CD4-positive, alpha-beta T cell (primary cell): ENCODE measurements at regions of chr2 and their contacts with region 1.

Region 1: DNA sequence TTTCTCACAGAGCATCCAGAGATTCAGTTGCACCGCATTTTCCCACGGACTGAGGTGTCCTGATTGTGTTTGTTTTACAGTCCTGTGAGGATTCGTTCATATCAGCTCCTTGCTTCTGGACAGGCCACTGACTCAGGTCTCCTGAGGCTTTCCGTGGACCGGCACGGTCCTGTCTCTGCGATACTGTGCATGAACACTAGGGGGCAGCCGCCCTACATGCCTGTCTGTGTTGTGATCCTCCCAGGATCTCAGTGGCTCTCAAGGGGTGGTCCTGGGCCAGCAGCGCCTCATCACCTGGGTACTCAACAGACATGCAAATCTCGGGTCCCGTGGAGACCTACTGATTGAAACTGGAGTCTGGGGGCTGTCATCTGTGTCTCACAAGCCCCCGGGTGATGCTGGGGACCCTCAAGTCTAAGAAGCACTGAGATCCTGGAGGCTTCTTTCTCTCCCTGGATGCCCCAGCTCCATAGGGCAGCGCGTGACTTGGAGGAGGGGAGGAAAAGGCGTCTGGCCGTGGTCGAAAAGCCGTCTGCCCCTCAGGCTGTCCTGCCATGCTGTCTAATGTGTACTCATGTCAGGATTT is 28.9 kb downstream of the IL1R2 start:
- DNase-seq: peak; percentile 69 to 88 (median 79)
- ATAC-seq: peak; percentile 96
- H3K4me3 ChIP-seq: no peak overlapping the region
- H3K4me3 Mint-ChIP-seq: no peak overlapping the region
- H3K27ac ChIP-seq: no peak overlapping the region
- H3K27ac Mint-ChIP-seq: no peak overlapping the region
- H3K4me1 ChIP-seq: peaks cover 6% of the 10 kb centered on the region
- H3K4me1 Mint-ChIP-seq: no peaks in the 10 kb centered on the region
- H3K27me3 ChIP-seq: no peaks in the 10 kb centered on the region
- H3K27me3 Mint-ChIP-seq: peaks cover 3% of the 10 kb centered on the region
- CTCF ChIP-seq: peak; percentile 98

Region 2: DNA sequence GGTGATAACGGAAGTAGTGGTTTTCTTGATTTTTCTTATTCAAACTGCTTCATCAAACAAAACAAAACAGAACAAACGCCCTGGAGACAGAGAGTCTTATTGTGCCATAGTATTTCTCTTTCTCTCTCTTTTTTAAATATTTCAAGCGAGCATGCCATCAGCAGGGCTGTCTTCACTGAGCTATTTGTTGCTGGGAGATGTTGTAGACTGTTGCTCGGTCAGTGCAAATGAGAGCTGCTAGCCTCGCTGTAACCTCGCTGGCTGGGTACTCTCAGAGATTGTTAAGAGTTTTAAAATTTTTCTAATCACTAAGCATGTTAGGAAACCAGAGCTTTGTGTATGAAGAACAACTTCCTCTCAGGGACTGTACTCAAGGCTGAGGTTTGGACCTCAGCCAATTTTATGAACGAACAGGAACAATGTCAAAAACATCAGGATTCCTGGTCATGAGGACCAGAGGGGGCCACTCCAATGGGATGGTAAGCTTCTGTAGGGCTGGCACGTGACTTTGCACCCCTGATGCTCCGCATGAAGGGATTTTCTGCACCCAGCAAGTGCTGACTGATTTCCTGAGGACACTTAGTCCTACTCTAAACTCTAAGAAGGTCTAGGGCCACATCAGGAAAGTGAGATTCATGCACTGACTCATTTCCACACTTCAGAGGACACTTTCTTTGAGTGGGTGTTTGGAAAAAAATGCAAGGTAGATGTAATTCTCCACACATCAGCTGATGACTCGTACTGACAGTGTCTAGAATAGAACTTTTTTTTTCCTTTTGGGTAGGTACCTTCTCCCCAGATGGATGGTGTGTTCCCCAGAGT is 62.1 kb after region 1 on chr2:
- CTCF ChIA-PET with region 1: interaction called, 3 read pairs
- POLR2A ChIA-PET with region 1: no interaction called
- intact Hi-C with region 1: loop called in 1 of 2 experiments (anchors 5 kb)
- DNase-seq: peak in 9 of 14 experiments; percentile 3 to 80 (median 19)
- ATAC-seq: peak; percentile 80
- H3K4me3 ChIP-seq: peak overlapping the region; percentile 36
- H3K4me3 Mint-ChIP-seq: peak overlapping the region; percentile 77
- H3K27ac ChIP-seq: peak overlapping the region; percentile 44 to 79
- H3K27ac Mint-ChIP-seq: peak overlapping the region; percentile 86
- H3K4me1 ChIP-seq: peaks cover 21% of the 10 kb centered on the region
- H3K4me1 Mint-ChIP-seq: peaks cover 44% of the 10 kb centered on the region
- H3K27me3 ChIP-seq: no peaks in the 10 kb centered on the region
- H3K27me3 Mint-ChIP-seq: no peaks in the 10 kb centered on the region
- CTCF ChIP-seq: no peak

Region 3: DNA sequence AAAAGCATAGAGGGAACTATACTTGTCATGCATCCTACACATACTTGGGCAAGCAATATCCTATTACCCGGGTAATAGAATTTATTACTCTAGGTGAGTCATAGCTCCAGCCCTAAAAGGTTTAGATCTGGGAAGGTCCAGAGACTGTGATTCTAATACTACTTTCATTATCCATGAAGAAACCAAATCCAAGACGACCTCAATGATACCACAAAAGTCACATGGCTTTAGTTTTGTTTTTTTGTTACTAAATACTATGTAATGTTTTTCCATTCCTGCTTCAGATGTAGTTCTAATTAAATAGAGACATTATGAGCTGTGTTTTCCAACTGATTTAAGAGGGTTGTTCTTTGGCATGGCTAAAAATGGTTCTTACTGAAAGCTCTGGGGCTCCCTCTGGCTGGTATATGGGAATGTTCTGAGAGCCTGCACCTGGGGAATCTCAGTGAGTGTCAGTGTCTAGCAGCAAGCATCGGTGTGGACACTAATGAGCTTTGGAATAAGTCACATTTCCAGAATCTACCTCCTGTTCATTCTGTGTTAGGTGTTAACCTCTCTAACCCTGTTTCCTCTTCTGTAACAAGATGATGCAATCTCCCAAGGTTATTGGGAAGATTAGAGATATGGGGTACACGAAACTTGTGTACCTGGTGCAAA is 145.6 kb after region 1 on chr2:
- CTCF ChIA-PET with region 1: interaction called, 3 read pairs
- POLR2A ChIA-PET with region 1: no interaction called
- intact Hi-C with region 1: loop called (anchors 10 kb)
- DNase-seq: peak in 1 of 14 experiments; percentile 13
- ATAC-seq: no peak
- H3K4me3 ChIP-seq: no peak overlapping the region
- H3K4me3 Mint-ChIP-seq: no peak overlapping the region
- H3K27ac ChIP-seq: no peak overlapping the region
- H3K27ac Mint-ChIP-seq: no peak overlapping the region
- H3K4me1 ChIP-seq: no peaks in the 10 kb centered on the region
- H3K4me1 Mint-ChIP-seq: no peaks in the 10 kb centered on the region
- H3K27me3 ChIP-seq: no peaks in the 10 kb centered on the region
- H3K27me3 Mint-ChIP-seq: no peaks in the 10 kb centered on the region
- CTCF ChIP-seq: no peak

Region 4: GRCh38 chr2:102240640-102241370 is 220.1 kb after region 1 on chr2:
- CTCF ChIA-PET with region 1: interaction called, 23 read pairs
- POLR2A ChIA-PET with region 1: interaction called, 7 read pairs
- intact Hi-C with region 1: loop called (anchors 1 kb)
- DNase-seq: peak; percentile 74 to 93 (median 85)
- ATAC-seq: peak; percentile 94
- H3K4me3 ChIP-seq: no peak overlapping the region
- H3K4me3 Mint-ChIP-seq: no peak overlapping the region
- H3K27ac ChIP-seq: no peak overlapping the region
- H3K27ac Mint-ChIP-seq: no peak overlapping the region
- H3K4me1 ChIP-seq: peaks cover 21% of the 10 kb centered on the region
- H3K4me1 Mint-ChIP-seq: peaks cover 9% of the 10 kb centered on the region
- H3K27me3 ChIP-seq: no peaks in the 10 kb centered on the region
- H3K27me3 Mint-ChIP-seq: no peaks in the 10 kb centered on the region
- CTCF ChIP-seq: peak; percentile 93

Region 5: DNA sequence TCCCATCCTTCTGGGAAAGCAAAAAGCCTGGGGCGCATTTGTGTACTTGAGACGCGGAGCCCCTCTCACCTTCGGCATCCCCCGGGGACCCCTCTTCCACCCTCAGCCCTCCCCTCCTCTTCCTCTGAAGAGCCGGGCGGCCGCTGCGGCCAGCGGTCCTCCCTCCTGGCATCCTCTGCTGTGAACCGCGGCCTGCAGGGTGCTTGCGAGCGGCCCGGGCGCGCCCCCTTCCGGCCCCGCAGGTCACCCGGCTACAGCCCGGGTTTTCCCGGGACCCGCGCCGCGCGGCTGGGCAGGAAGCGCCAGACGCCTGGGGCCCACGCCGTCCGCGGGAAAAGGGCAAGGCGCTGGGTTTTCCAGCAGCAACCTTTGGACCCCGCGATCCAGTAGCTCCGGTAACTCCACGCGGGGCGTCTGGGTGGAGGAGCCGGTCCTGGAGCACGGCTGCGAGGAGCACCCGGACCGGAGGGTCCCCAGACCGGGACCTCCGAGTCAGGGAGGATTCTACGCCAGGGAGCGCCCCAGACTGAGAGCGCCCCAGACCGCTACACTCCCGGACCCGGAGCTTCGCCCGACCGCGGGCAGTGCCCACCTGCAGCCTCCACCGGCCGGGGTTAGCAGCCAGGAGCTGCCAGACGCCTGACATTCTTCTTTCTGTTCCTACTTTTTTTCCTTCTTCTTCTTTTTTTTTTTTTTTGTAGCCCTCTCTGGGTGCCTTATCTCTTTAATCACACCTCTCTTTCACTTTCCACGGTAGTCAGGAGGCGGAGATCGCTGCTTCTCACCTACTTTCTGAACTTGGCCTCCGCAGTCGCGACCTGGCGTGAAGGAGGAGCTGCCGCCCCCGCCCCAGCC is 335.1 kb after region 1 on chr2 and contains the start of gene IL18R1:
- CTCF ChIA-PET with region 1: interaction called, 3 read pairs
- POLR2A ChIA-PET with region 1: no interaction called
- intact Hi-C with region 1: loop called in 1 of 2 experiments (anchors 5 kb)
- DNase-seq: peak; percentile 29 to 88 (median 55)
- ATAC-seq: peak; percentile 76
- H3K4me3 ChIP-seq: peak within 1 kb of the TSS; percentile 97
- H3K4me3 Mint-ChIP-seq: peak within 1 kb of the TSS; percentile 91
- H3K27ac ChIP-seq: peak within 1 kb of the TSS; percentile 41 to 83
- H3K27ac Mint-ChIP-seq: peak within 1 kb of the TSS; percentile 87
- H3K4me1 ChIP-seq: peaks cover 27% of the 10 kb centered on the region
- H3K4me1 Mint-ChIP-seq: peaks cover 44% of the 10 kb centered on the region
- H3K27me3 ChIP-seq: no peaks in the 10 kb centered on the region
- H3K27me3 Mint-ChIP-seq: no peaks in the 10 kb centered on the region
- CTCF ChIP-seq: peak; percentile 92
- total RNA-seq, gene IL18R1: 7.6 to 9.1 TPM

Region 6: GRCh38 chr2:102442967-102443828 is 422.5 kb after region 1 on chr2:
- CTCF ChIA-PET with region 1: interaction called, 3 read pairs
- POLR2A ChIA-PET with region 1: no interaction called
- intact Hi-C with region 1: loop called in 1 of 2 experiments (anchors 1 kb)
- DNase-seq: peak in 13 of 14 experiments; percentile 11 to 75 (median 29)
- ATAC-seq: peak; percentile 78
- H3K4me3 ChIP-seq: no peak overlapping the region
- H3K4me3 Mint-ChIP-seq: no peak overlapping the region
- H3K27ac ChIP-seq: no peak overlapping the region
- H3K27ac Mint-ChIP-seq: no peak overlapping the region
- H3K4me1 ChIP-seq: no peaks in the 10 kb centered on the region
- H3K4me1 Mint-ChIP-seq: peaks cover 7% of the 10 kb centered on the region
- H3K27me3 ChIP-seq: no peaks in the 10 kb centered on the region
- H3K27me3 Mint-ChIP-seq: no peaks in the 10 kb centered on the region
- CTCF ChIP-seq: peak; percentile 84

Region 7: GRCh38 chr2:102449370-102449974 is 428.8 kb after region 1 on chr2:
- CTCF ChIA-PET with region 1: interaction called, 4 read pairs
- POLR2A ChIA-PET with region 1: no interaction called
- intact Hi-C with region 1: loop called in 1 of 2 experiments (anchors 1 kb)
- DNase-seq: peak; percentile 44 to 74 (median 56)
- ATAC-seq: no peak
- H3K4me3 ChIP-seq: no peak overlapping the region
- H3K4me3 Mint-ChIP-seq: no peak overlapping the region
- H3K27ac ChIP-seq: no peak overlapping the region
- H3K27ac Mint-ChIP-seq: no peak overlapping the region
- H3K4me1 ChIP-seq: no peaks in the 10 kb centered on the region
- H3K4me1 Mint-ChIP-seq: peaks cover 8% of the 10 kb centered on the region
- H3K27me3 ChIP-seq: no peaks in the 10 kb centered on the region
- H3K27me3 Mint-ChIP-seq: no peaks in the 10 kb centered on the region
- CTCF ChIP-seq: peak; percentile 77

Region 8: GRCh38 chr2:103284750-103285149 is 1264.1 kb after region 1 on chr2:
- CTCF ChIA-PET with region 1: no interaction called
- POLR2A ChIA-PET with region 1: no interaction called
- intact Hi-C with region 1: no loop called
- DNase-seq: no peak
- ATAC-seq: no peak
- H3K4me3 ChIP-seq: no peak overlapping the region
- H3K4me3 Mint-ChIP-seq: no peak overlapping the region
- H3K27ac ChIP-seq: no peak overlapping the region
- H3K27ac Mint-ChIP-seq: no peak overlapping the region
- H3K4me1 ChIP-seq: no peaks in the 10 kb centered on the region
- H3K4me1 Mint-ChIP-seq: no peaks in the 10 kb centered on the region
- H3K27me3 ChIP-seq: no peaks in the 10 kb centered on the region
- H3K27me3 Mint-ChIP-seq: no peaks in the 10 kb centered on the region
- CTCF ChIP-seq: no peak